ENCODE measurements at regions of chr14 and their contacts with region 1.

Region 1: DNA sequence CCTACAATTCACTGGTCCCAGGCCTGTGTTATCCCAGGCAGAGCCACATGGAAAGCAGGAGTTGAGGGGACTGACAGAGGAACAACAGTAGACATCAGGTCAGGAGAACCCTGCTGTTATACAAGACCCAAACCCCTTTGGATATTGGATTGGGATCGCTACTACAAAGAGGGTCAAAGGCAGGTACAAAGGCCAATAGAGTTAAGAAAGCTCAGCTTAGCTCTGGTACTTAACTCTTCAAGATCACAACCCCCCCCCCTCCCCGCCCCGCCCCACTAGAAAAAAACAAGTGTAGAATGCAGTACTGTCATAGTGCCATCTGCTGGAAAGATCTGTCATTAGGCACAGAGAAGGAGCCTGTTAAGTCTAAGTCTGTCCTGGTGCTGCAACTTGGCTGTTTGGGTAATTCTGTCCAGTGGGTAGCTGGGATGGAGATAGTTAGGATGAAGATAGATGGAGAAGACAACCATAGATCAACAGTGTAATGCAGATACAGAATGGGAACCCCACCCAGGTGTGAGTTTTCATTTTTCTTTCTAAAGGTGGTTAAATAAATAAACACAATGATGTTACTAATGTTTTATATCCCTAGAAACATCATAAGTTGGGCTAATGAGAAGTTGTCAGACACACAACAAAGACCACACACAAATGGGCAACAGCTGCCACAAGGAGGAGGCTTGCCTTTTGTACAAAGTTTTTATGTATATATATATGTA is 17.2 kb downstream of the REM2 start:
- DNase-seq: peak; percentile 56
- H3K4me3 ChIP-seq: no peak overlapping the region
- H3K27ac ChIP-seq: no peak overlapping the region
- H3K4me1 ChIP-seq: peaks cover 20% of the 10 kb centered on the region
- H3K27me3 ChIP-seq: no peaks in the 10 kb centered on the region
- CTCF ChIP-seq: peak; percentile 66 to 68

Region 2: DNA sequence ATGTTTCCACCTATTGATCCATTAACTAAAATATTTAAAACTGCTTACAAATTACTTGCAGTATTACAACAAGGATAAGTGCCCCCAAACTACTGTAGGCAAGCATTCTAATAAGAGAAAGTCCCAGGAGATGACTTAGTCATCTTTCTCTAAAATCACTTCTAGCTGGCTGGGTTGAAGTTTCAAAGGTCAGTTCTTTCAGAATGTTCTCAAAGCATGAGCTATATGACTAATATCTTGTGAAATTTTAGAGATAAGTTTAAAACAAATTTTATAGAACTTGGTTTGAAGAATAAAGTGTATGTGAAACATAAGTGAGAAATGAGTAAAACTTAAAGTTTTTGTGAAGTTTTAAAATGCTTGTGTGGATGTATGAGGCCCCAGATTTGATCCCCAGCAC is 231.8 kb before region 1 on chr14:
- CTCF ChIA-PET with region 1: no interaction called
- dilution Hi-C with region 1: loop called (anchors 10 kb)
- in situ Hi-C with region 1: no loop called
- intact Hi-C with region 1: no loop called
- DNase-seq: no peak
- H3K4me3 ChIP-seq: no peak overlapping the region
- H3K27ac ChIP-seq: no peak overlapping the region
- H3K4me1 ChIP-seq: no peaks in the 10 kb centered on the region
- H3K27me3 ChIP-seq: no peaks in the 10 kb centered on the region
- CTCF ChIP-seq: no peak

Region 3: GRCh38 chr14:22781586-22781991 is 118.7 kb before region 1 on chr14:
- CTCF ChIA-PET with region 1: no interaction called
- dilution Hi-C with region 1: no loop called
- in situ Hi-C with region 1: no loop called
- intact Hi-C with region 1: loop called (anchors 1 kb)
- DNase-seq: peak; percentile 14
- H3K4me3 ChIP-seq: no peak overlapping the region
- H3K27ac ChIP-seq: no peak overlapping the region
- H3K4me1 ChIP-seq: no peaks in the 10 kb centered on the region
- H3K27me3 ChIP-seq: no peaks in the 10 kb centered on the region
- CTCF ChIP-seq: no peak

Region 4: GRCh38 chr14:22836301-22837113 is 63.7 kb before region 1 on chr14 and contains the start of gene MMP14:
- CTCF ChIA-PET with region 1: no interaction called
- dilution Hi-C with region 1: loop called (anchors 5 kb)
- in situ Hi-C with region 1: no loop called
- intact Hi-C with region 1: loop called (anchors 1 kb)
- DNase-seq: peak; percentile 86
- H3K4me3 ChIP-seq: peak within 1 kb of the TSS; percentile 84 to 94 (median 86)
- H3K27ac ChIP-seq: peak within 1 kb of the TSS; percentile 86
- H3K4me1 ChIP-seq: peaks cover 24% of the 10 kb centered on the region
- H3K27me3 ChIP-seq: no peaks in the 10 kb centered on the region
- CTCF ChIP-seq: peak in 1 of 2 donors; percentile 57
- total RNA-seq, gene MMP14: 525 to 766 TPM

Region 5: GRCh38 chr14:22852940-22853767 is 47.1 kb before region 1 on chr14:
- CTCF ChIA-PET with region 1: interaction called, 9 read pairs
- dilution Hi-C with region 1: no loop called
- in situ Hi-C with region 1: no loop called
- intact Hi-C with region 1: loop called (anchors 1 kb)
- DNase-seq: peak; percentile 80
- H3K4me3 ChIP-seq: peak overlapping the region in 2 of 3 experiments; percentile 7 to 52
- H3K27ac ChIP-seq: peak overlapping the region; percentile 90
- H3K4me1 ChIP-seq: peaks cover 54% of the 10 kb centered on the region
- H3K27me3 ChIP-seq: no peaks in the 10 kb centered on the region
- CTCF ChIP-seq: peak; percentile 91 to 93

Region 6: GRCh38 chr14:22886500-22887259 is 13.6 kb before region 1 on chr14:
- CTCF ChIA-PET with region 1: interaction called, 3 read pairs
- dilution Hi-C with region 1: no loop called
- in situ Hi-C with region 1: no loop called
- intact Hi-C with region 1: loop called (anchors 1 kb)
- DNase-seq: peak; percentile 56
- H3K4me3 ChIP-seq: peak overlapping the region; percentile 49 to 61 (median 50)
- H3K27ac ChIP-seq: peak overlapping the region; percentile 58
- H3K4me1 ChIP-seq: peaks cover 35% of the 10 kb centered on the region
- H3K27me3 ChIP-seq: no peaks in the 10 kb centered on the region
- CTCF ChIP-seq: peak in 1 of 2 donors; percentile 25

Region 7: GRCh38 chr14:22955702-22956569 is 55.7 kb after region 1 on chr14:
- CTCF ChIA-PET with region 1: no interaction called
- dilution Hi-C with region 1: no loop called
- in situ Hi-C with region 1: no loop called
- intact Hi-C with region 1: no loop called
- DNase-seq: peak; percentile 55
- H3K4me3 ChIP-seq: peak overlapping the region; percentile 68 to 76 (median 68)
- H3K27ac ChIP-seq: peak overlapping the region; percentile 79
- H3K4me1 ChIP-seq: peaks cover 11% of the 10 kb centered on the region
- H3K27me3 ChIP-seq: no peaks in the 10 kb centered on the region
- CTCF ChIP-seq: no peak